ENCODE measurements at regions of chr2 and their contacts with region 1.

Region 1: GRCh38 chr2:227106845-227107759 is 56.9 kb downstream of the COL4A4 start:
- DNase-seq: peak in 4 of 9 experiments; percentile 14 to 43 (median 24)
- ATAC-seq: no peak
- H3K4me3 ChIP-seq: no peak overlapping the region
- H3K4me3 Mint-ChIP-seq: no peak overlapping the region
- H3K27ac ChIP-seq: no peak overlapping the region
- H3K27ac Mint-ChIP-seq: no peak overlapping the region
- H3K4me1 ChIP-seq: no peaks in the 10 kb centered on the region
- H3K4me1 Mint-ChIP-seq: no peaks in the 10 kb centered on the region
- H3K27me3 ChIP-seq: no peaks in the 10 kb centered on the region
- H3K27me3 Mint-ChIP-seq: peaks cover 5% of the 10 kb centered on the region
- CTCF ChIP-seq: peak; percentile 40

Region 2: GRCh38 chr2:225668606-225669266 is 1438.4 kb before region 1 on chr2:
- CTCF ChIA-PET with region 1: no interaction called
- POLR2A ChIA-PET with region 1: no interaction called
- intact Hi-C with region 1: loop called in 1 of 2 experiments (anchors 5 kb)
- DNase-seq: peak in 3 of 9 experiments; percentile 17 to 67 (median 52)
- ATAC-seq: peak; percentile 68
- H3K4me3 ChIP-seq: no peak overlapping the region
- H3K4me3 Mint-ChIP-seq: no peak overlapping the region
- H3K27ac ChIP-seq: no peak overlapping the region
- H3K27ac Mint-ChIP-seq: no peak overlapping the region
- H3K4me1 ChIP-seq: no peaks in the 10 kb centered on the region
- H3K4me1 Mint-ChIP-seq: no peaks in the 10 kb centered on the region
- H3K27me3 ChIP-seq: no peaks in the 10 kb centered on the region
- H3K27me3 Mint-ChIP-seq: peaks cover 7% of the 10 kb centered on the region
- CTCF ChIP-seq: peak; percentile 74

Region 3: DNA sequence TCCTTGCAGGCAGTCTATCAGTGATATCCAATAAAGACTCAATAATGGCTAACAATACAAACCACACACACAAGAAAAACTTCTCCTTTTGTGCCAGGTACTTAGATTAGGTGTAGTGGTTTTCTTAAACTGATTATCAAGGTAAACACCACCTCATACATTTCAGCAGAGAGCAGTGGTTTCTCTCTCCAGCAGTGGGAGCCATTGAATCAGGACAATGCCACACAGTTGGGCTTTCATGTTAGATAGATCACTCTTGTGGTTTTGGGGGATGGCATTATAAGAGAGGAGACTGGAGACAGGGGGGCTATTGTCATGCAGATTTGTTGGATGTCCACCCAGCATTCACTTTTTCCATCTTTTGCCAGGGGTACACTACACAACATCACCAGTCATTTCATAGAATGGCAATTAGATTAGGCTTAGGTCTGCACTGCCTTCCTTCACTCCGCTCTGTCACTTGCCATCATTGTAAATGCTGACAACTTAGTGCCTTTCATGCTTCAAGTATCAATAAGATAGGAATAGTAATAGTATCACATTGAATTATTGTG is 293.9 kb before region 1 on chr2:
- CTCF ChIA-PET with region 1: no interaction called
- POLR2A ChIA-PET with region 1: no interaction called
- intact Hi-C with region 1: loop called in 1 of 2 experiments (anchors 10 kb)
- DNase-seq: peak in 2 of 9 experiments; percentile 10 to 21
- ATAC-seq: peak; percentile 31
- H3K4me3 ChIP-seq: no peak overlapping the region
- H3K4me3 Mint-ChIP-seq: no peak overlapping the region
- H3K27ac ChIP-seq: no peak overlapping the region
- H3K27ac Mint-ChIP-seq: no peak overlapping the region
- H3K4me1 ChIP-seq: no peaks in the 10 kb centered on the region
- H3K4me1 Mint-ChIP-seq: no peaks in the 10 kb centered on the region
- H3K27me3 ChIP-seq: peaks cover 0 to 7% of the 10 kb centered on the region in 2 experiments
- H3K27me3 Mint-ChIP-seq: peaks cover 37% of the 10 kb centered on the region
- CTCF ChIP-seq: no peak